ENCODE measurements at regions of chr7 and their contacts with region 1.

Region 1: GRCh38 chr7:137765362-137765761 is 81.4 kb downstream of the DGKI start:
- DNase-seq: no peak
- H3K4me3 ChIP-seq: no peak overlapping the region
- H3K27ac ChIP-seq: no peak overlapping the region
- H3K4me1 ChIP-seq: no peaks in the 10 kb centered on the region
- H3K27me3 ChIP-seq: no peaks in the 10 kb centered on the region
- CTCF ChIP-seq: no peak
- POLR2A ChIP-seq: no peak

Region 2: GRCh38 chr7:137694405-137694804 is 71.0 kb before region 1 on chr7:
- intact Hi-C with region 1: loop called (anchors 2 kb)
- DNase-seq: no peak
- H3K4me3 ChIP-seq: no peak overlapping the region
- H3K27ac ChIP-seq: no peak overlapping the region
- H3K4me1 ChIP-seq: no peaks in the 10 kb centered on the region
- H3K27me3 ChIP-seq: no peaks in the 10 kb centered on the region
- CTCF ChIP-seq: no peak
- POLR2A ChIP-seq: no peak